Activated CD4-positive, alpha-beta T cell treated with anti-CD3 and anti-CD28 coated beads for 36 hours (primary cell): ENCODE measurements at regions of chr3 and their contacts with region 1.

Region 1: GRCh38 chr3:16600780-16601539 is 4.3 kb downstream of the DAZL start:
- DNase-seq: peak; percentile 90
- ATAC-seq: no peak
- H3K4me3 Mint-ChIP-seq: no peak overlapping the region
- H3K27ac Mint-ChIP-seq: no peak overlapping the region
- H3K4me1 Mint-ChIP-seq: peaks cover 22% of the 10 kb centered on the region
- H3K27me3 Mint-ChIP-seq: peaks cover 20% of the 10 kb centered on the region

Region 2: GRCh38 chr3:16319307-16319706 is 281.7 kb before region 1 on chr3:
- CTCF ChIA-PET with region 1: no interaction called
- POLR2A ChIA-PET with region 1: no interaction called
- intact Hi-C with region 1: loop called in 1 of 2 experiments (anchors 5 kb)
- DNase-seq: peak; percentile 94
- ATAC-seq: peak; percentile 94
- H3K4me3 Mint-ChIP-seq: peak overlapping the region; percentile 3
- H3K27ac Mint-ChIP-seq: peak overlapping the region; percentile 90
- H3K4me1 Mint-ChIP-seq: peaks cover 74% of the 10 kb centered on the region
- H3K27me3 Mint-ChIP-seq: no peaks in the 10 kb centered on the region

Region 3: DNA sequence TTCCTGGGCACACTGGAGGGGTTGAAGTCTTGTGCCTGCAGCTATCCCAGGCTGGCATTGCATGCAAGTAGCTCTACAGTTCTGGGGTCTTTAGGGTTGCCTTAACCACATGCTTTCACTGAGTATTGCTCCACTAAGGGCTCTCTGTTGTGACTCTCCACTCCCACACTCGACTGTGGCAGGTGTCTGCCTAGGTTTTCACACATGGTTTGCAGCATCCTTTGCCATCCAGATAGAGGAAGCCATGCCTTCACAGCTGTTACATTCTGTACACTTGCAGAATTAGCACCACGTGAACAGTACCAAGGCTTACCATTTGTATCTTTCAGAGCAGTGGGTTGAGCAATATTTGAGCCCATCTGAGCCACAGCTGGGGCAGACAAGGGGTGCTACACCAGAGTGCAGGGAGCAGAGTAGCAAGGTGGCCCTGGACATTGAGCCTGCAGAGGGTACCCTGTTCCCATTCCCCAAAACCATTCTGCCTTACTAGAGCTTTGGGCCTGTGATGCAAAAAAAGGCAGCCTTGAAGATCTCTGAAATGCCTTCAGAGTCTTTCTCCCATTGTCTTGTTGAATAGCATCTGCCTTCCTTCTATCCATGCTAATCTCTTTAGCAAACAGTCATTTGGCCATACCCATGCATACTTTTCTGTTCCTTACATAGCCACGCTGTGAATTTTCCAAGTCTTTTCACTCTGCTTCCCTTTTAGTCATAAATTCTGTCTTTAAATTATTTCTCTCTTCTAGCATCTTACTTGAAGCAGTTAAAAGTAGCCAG is 188.6 kb after region 1 on chr3:
- CTCF ChIA-PET with region 1: interaction called, 6 read pairs
- POLR2A ChIA-PET with region 1: no interaction called
- intact Hi-C with region 1: loop called in 1 of 2 experiments (anchors 2 kb)
- DNase-seq: no peak
- ATAC-seq: no peak
- H3K4me3 Mint-ChIP-seq: no peak overlapping the region
- H3K27ac Mint-ChIP-seq: no peak overlapping the region
- H3K4me1 Mint-ChIP-seq: peaks cover 22% of the 10 kb centered on the region
- H3K27me3 Mint-ChIP-seq: peaks cover 10% of the 10 kb centered on the region

Region 4: DNA sequence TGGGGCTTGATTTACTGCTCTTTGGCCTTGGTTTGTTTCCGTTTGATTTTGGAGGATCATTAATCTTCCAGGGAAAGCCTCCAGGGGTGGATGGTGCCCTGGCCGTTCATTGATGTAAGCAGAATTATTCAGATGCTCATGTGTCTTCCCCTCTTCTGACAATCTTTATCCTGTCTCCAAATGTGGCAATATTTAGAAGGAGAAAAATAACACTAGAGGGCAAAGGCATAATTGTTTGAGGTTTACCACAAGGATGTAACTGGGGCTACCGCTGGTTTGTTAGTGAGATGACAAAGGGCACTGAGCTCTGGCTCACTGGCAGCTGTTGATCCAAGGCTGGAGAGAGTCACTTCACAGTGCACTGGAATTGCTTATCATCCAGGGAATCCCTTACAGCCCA is 265.6 kb after region 1 on chr3:
- CTCF ChIA-PET with region 1: no interaction called
- POLR2A ChIA-PET with region 1: no interaction called
- intact Hi-C with region 1: no loop called
- DNase-seq: no peak
- ATAC-seq: no peak
- H3K4me3 Mint-ChIP-seq: no peak overlapping the region
- H3K27ac Mint-ChIP-seq: no peak overlapping the region
- H3K4me1 Mint-ChIP-seq: peaks cover 16% of the 10 kb centered on the region
- H3K27me3 Mint-ChIP-seq: peaks cover 3% of the 10 kb centered on the region

Region 5: DNA sequence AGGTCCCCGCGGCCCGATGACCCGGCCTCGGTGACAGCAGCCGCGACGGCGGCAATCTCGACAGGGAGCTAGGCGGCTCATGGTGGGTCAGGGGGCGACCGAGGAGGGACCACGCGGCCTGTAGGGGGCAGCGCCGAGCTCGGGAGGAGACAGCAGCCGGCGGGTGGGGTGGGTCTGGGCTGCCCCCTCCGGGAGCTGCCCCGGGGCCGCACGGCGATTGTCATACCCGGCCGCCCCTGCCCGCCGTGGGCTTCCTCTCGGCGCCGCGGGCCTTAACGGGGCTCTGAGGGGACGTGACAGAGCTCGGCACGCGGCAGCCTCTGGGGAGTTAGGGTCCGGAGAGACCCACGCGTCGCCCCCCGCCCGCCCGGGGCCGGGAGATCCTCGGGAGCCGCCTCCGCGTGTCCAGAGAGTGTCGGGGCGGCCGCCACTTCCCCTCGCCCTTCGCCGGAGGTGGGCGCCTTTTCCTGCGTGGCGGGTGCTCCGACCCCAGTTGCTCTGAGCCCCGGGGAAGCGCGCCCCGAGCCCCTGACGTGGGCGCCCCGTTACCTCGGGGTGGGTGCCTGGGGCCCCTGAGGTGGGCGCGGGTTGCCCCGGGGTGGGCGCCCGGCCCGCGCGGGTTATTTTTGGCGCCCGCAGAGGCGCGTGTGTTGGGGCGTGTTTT is 283.3 kb after region 1 on chr3:
- CTCF ChIA-PET with region 1: interaction called, 3 read pairs
- POLR2A ChIA-PET with region 1: interaction called, 4 read pairs
- intact Hi-C with region 1: loop called (anchors 2 to 5 kb)
- DNase-seq: peak; percentile 87
- ATAC-seq: peak; percentile 61
- H3K4me3 Mint-ChIP-seq: peak overlapping the region; percentile 93
- H3K27ac Mint-ChIP-seq: peak overlapping the region; percentile 94
- H3K4me1 Mint-ChIP-seq: peaks cover 20% of the 10 kb centered on the region
- H3K27me3 Mint-ChIP-seq: no peaks in the 10 kb centered on the region

Region 6: GRCh38 chr3:17032407-17033034 is 431.6 kb after region 1 on chr3:
- CTCF ChIA-PET with region 1: no interaction called
- POLR2A ChIA-PET with region 1: no interaction called
- intact Hi-C with region 1: loop called in 1 of 2 experiments (anchors 5 kb)
- DNase-seq: no peak
- ATAC-seq: no peak
- H3K4me3 Mint-ChIP-seq: no peak overlapping the region
- H3K27ac Mint-ChIP-seq: no peak overlapping the region
- H3K4me1 Mint-ChIP-seq: peaks cover 82% of the 10 kb centered on the region
- H3K27me3 Mint-ChIP-seq: no peaks in the 10 kb centered on the region

Region 7: DNA sequence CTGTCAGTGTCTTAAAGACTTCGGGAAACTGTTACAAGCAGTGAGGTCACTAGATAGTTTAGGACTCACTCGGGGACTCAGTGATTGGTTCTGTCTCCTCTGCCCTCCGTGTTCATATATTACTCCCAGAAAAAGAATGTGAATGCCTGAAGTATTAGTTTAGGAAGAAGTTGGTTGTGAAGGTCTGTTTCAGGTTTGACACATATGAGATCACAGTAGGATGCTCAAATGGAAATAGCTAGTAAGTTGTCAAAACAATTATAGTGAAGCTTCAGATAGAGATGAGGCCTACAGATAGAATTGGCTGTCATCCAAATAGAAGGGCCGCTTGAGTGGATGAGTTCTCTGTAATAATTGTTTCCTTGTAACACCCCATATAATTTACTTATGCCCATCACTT is 456.4 kb after region 1 on chr3:
- CTCF ChIA-PET with region 1: no interaction called
- POLR2A ChIA-PET with region 1: no interaction called
- intact Hi-C with region 1: no loop called
- DNase-seq: no peak
- ATAC-seq: no peak
- H3K4me3 Mint-ChIP-seq: no peak overlapping the region
- H3K27ac Mint-ChIP-seq: no peak overlapping the region
- H3K4me1 Mint-ChIP-seq: peaks cover 15% of the 10 kb centered on the region
- H3K27me3 Mint-ChIP-seq: no peaks in the 10 kb centered on the region

Region 8: DNA sequence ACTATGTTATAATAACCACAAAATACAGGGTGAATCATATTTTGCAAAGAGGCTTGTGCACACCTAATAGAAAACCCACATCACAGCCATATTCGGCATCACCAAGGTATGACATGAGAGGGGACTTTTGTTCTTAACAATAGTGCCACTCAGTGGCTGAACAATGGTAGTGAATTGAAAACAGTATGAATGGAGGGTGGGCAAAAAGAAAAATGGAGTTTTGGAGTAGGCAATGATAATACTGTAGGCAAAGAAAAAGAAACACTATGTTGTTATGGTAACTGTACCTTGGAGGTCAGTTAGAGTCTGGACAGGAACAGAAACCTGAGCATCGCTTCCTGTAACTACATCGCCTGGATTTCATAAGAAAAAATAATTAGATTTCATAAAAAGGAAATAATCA is 632.4 kb after region 1 on chr3:
- CTCF ChIA-PET with region 1: interaction called, 20 read pairs
- POLR2A ChIA-PET with region 1: interaction called, 7 read pairs
- intact Hi-C with region 1: loop called (anchors 1 kb)
- DNase-seq: peak; percentile 47
- ATAC-seq: peak; percentile 91
- H3K4me3 Mint-ChIP-seq: no peak overlapping the region
- H3K27ac Mint-ChIP-seq: no peak overlapping the region
- H3K4me1 Mint-ChIP-seq: peaks cover 24% of the 10 kb centered on the region
- H3K27me3 Mint-ChIP-seq: no peaks in the 10 kb centered on the region

Region 9: GRCh38 chr3:17841190-17841828 is 1240.3 kb after region 1 on chr3:
- CTCF ChIA-PET with region 1: interaction called, 3 read pairs
- POLR2A ChIA-PET with region 1: no interaction called
- intact Hi-C with region 1: loop called (anchors 1 to 5 kb)
- DNase-seq: peak; percentile 87
- ATAC-seq: peak; percentile 97
- H3K4me3 Mint-ChIP-seq: no peak overlapping the region
- H3K27ac Mint-ChIP-seq: no peak overlapping the region
- H3K4me1 Mint-ChIP-seq: no peaks in the 10 kb centered on the region
- H3K27me3 Mint-ChIP-seq: no peaks in the 10 kb centered on the region